Adrenal gland (tissue), 19 donors: ENCODE measurements at regions of chr5 and their contacts with region 1.

Region 1: DNA sequence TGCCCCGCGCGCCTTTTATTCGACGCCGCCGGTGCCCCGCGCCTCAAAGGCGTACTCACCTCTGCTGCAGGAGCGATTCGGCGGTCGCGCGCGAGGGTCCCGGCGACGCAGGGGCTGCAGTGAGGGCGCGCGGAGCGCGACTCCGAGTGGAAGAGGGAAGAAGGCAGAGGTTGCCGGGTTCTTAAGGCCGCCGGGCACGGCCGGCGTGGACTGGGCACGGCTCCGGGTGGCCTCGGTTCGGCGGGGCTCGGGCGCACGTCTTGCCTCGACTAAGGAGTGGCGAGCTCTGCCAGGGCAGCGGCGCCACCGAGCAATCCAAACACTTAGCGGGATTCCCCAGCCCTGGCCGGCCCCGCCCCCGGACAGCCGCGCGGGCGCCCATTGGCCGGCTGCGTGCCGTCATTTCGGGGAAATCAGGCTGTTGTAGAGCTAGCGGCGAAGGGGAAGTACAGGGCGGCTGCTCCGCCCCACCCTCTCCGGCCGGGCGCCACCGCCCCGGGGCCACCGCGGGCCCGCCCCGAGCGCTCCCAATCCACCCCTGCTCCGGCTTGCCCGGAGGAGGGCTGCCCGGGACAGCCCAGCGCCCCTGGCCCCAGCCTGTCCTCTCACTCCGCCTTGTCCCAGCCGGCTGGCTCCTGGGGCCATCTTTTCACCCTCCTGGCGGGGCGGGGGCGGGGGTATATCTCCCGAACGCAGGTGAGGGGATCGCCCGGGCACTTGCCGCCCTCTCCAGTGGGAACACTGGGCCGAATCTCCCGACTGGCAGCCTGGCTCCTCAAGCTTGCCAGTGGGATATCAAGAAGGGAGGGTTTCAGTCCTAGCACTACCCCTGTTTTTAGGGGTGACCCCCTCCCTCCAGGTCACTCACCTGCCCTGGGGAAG is at the start of gene IRF1:
- DNase-seq: peak; percentile 96 to 98 (median 97)
- H3K4me3 ChIP-seq: peak within 1 kb of the TSS; percentile 43 to 88 (median 59)
- H3K27ac ChIP-seq: peak within 1 kb of the TSS; percentile 83 to 99 (median 93)
- H3K4me1 ChIP-seq: peaks cover 13 to 49% of the 10 kb centered on the region in 2 donors
- H3K27me3 ChIP-seq: no peaks in the 10 kb centered on the region
- CTCF ChIP-seq: no peak
- POLR2A ChIP-seq: peak; percentile 96
- total RNA-seq, gene IRF1: 3.0 to 116 (median 24.4) TPM

Region 2: DNA sequence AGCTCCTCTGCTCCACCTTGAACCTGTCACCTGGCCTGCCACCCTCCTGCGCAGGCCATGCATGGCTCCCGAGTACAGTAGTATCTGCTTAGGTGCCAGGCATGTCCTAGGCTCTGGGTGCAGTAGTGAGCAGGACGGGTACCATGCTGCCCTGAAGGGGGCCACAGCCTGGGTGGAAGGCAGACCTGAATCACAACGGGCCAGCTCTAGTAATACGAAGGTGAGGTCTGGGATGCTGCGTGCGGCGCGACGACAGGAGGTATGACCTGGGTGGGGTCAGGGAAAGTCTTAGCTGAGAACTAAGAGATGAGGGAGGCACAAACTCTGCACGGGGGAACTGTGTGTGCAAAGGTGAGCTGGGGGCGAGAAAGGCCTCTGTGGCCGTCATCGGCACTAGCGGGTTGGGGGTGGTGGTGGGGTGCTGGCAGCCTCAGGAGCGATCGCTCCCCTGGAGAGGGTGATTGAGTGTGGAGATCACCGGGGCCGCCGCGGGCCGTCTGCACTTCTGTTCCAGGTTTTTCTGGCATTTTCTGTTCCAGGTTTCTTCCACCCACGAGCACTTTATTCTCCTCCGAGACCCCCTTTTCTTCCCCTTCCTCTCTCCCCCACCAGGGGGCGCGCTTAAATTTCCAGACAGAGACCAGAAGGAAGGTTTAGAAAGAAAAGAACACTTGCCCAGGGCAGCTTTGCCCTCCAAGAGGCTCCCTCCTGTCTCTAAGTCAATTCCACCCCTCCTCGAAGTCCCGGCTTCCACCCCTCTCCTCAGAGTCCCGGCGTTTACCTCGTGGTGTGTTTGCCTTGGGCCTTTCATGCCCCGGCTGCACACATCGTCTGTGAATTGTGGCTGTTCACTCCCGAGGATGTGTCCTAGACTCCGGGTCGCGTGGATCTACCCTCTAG is 218.2 kb before region 1 on chr5:
- intact Hi-C with region 1: loop called in 1 of 2 experiments (anchors 10 kb)
- DNase-seq: peak in 6 of 7 donors; percentile 51 to 82 (median 70)
- H3K4me3 ChIP-seq: peak overlapping the region in 1 of 4 donors; percentile 11
- H3K27ac ChIP-seq: no peak overlapping the region
- H3K4me1 ChIP-seq: no peaks in the 10 kb centered on the region
- H3K27me3 ChIP-seq: no peaks in the 10 kb centered on the region
- CTCF ChIP-seq: peak; percentile 60 to 88 (median 77)
- POLR2A ChIP-seq: no peak

Region 3: GRCh38 chr5:132419502-132420468 is 70.9 kb before region 1 on chr5:
- intact Hi-C with region 1: loop called (anchors 5 to 10 kb)
- DNase-seq: peak; percentile 59 to 86 (median 72)
- H3K4me3 ChIP-seq: no peak overlapping the region
- H3K27ac ChIP-seq: peak overlapping the region in 3 of 5 donors; percentile 11 to 71 (median 52)
- H3K4me1 ChIP-seq: peaks cover 32 to 77% of the 10 kb centered on the region in 2 donors
- H3K27me3 ChIP-seq: no peaks in the 10 kb centered on the region
- CTCF ChIP-seq: peak; percentile 86 to 94 (median 90)
- POLR2A ChIP-seq: no peak

Region 4: GRCh38 chr5:132576123-132576522 is 85.4 kb after region 1 on chr5:
- intact Hi-C with region 1: no loop called
- DNase-seq: no peak
- H3K4me3 ChIP-seq: no peak overlapping the region
- H3K27ac ChIP-seq: no peak overlapping the region
- H3K4me1 ChIP-seq: no peaks in the 10 kb centered on the region
- H3K27me3 ChIP-seq: no peaks in the 10 kb centered on the region
- CTCF ChIP-seq: no peak
- POLR2A ChIP-seq: no peak

Region 5: DNA sequence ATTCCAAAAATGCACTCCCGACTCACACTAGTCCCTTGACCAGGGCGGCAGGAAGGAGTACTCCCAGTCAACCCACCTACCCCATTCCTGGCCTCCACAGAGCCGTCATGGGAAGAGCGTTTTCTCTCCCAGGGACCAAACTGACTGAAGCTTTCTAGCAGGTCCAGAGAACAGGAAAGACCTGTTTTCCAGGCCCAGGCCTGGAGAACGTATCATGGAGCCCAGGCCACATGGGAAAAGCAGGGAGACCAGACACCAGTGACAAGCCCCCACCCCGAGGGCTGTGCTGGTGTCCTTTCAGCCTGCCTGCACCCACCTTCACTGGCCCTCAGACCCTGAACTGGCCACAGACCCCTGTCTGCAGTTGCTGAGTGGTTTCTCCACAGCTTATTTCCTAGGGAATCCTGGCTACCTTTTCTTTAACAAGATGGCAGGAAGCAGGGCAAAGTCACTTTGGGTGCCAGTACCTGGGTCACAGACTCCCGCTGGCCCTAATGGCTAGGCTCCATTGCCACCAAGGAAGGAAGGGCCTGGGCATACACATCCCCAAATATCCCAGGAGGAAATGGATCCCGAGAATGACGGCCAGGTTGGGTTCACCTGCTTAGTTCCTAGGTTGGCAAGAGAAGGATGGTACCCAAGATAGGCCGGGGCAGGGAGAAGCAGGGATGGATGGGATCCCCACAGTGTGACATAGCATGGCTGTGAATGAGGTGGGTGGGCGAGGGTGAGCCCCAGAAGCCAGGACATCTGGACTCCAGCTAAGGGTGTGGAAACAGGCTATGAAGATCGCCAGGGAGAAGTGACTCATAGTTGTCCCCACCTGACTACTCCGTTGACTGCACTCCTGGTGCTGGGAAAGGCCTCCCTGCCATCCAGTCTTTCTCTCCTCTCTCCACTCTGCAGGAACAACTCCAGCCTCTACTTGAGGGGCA is 268.7 kb after region 1 on chr5:
- intact Hi-C with region 1: no loop called
- DNase-seq: peak in 1 of 7 donors; percentile 41
- H3K4me3 ChIP-seq: no peak overlapping the region
- H3K27ac ChIP-seq: no peak overlapping the region
- H3K4me1 ChIP-seq: no peaks in the 10 kb centered on the region
- H3K27me3 ChIP-seq: no peaks in the 10 kb centered on the region
- CTCF ChIP-seq: no peak
- POLR2A ChIP-seq: no peak